K562 (cell line): ENCODE measurements at regions of chr10 and their contacts with region 1.

Region 1: GRCh38 chr10:116836902-116837523 is 12.3 kb upstream of the ENO4 start:
- DNase-seq: peak in 2 of 4 experiments; percentile 6 to 11
- ATAC-seq: peak; percentile 36; the same call in 1 of the 3 replicates
- H3K4me3 ChIP-seq: no peak overlapping the region
- H3K27ac ChIP-seq: no peak overlapping the region
- H3K4me1 ChIP-seq: no peaks in the 10 kb centered on the region
- H3K27me3 ChIP-seq: peaks cover 9 to 35% of the 10 kb centered on the region in 2 experiments; a peak in 4 of 5 replicates
- CTCF ChIP-seq: peak; percentile 22 to 61 (median 54); a peak in 4 of 6 replicates
- EP300 ChIP-seq: no peak
- POLR2A ChIP-seq: no peak
- RAD21 ChIP-seq: peak; percentile 54 to 65

Region 2: DNA sequence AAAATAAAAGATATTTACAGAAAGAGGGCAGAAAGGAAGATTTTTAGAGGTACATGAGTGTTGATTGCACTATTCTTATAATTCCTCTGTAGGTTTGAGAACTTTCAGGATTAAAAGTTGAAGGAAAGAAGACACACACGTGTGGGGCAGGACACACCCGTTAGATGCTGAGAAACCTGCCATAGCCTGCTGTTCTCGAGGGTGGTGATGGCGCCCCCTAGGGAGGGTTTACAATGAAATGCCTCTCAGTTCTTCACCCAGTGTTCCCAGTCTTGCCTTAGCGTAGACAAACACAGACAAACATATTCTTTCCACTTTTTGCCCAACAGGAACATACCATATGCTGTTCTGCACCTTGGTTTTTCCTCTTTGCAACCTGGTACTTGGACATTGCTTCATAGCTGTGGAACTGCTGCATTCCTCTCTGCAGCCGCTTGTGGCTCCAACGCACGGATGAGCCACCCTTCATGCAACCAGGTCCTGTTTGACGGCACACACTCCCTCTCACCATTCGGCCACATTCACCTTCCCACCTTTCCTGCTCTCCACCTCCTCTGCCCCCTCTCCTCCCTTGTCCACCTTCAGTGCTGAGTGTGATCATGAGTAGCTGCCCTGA is 71.4 kb before region 1 on chr10:
- CTCF ChIA-PET with region 1: no interaction called
- POLR2A ChIA-PET with region 1: no interaction called
- in situ Hi-C with region 1: no loop called
- intact Hi-C with region 1: no loop called
- DNase-seq: peak; percentile 55 to 61 (median 58)
- ATAC-seq: peak; percentile 91
- H3K4me3 ChIP-seq: no peak overlapping the region
- H3K27ac ChIP-seq: no peak overlapping the region
- H3K4me1 ChIP-seq: no peaks in the 10 kb centered on the region; a peak in 1 of 5 replicates
- H3K27me3 ChIP-seq: peaks cover 0 to 20% of the 10 kb centered on the region in 2 experiments; a peak in 3 of 5 replicates
- CTCF ChIP-seq: peak; percentile 61 to 68 (median 64)
- EP300 ChIP-seq: no peak
- POLR2A ChIP-seq: no peak
- RAD21 ChIP-seq: peak; percentile 13 to 52; a peak in 2 of 4 replicates

Region 3: GRCh38 chr10:116952729-116953128 is 115.7 kb after region 1 on chr10:
- CTCF ChIA-PET with region 1: no interaction called
- POLR2A ChIA-PET with region 1: no interaction called
- in situ Hi-C with region 1: no loop called
- intact Hi-C with region 1: no loop called
- DNase-seq: no peak
- ATAC-seq: no peak
- H3K4me3 ChIP-seq: no peak overlapping the region
- H3K27ac ChIP-seq: no peak overlapping the region
- H3K4me1 ChIP-seq: peaks cover 0 to under 1% of the 10 kb centered on the region in 2 experiments; a peak in 2 of 5 replicates
- H3K27me3 ChIP-seq: no peaks in the 10 kb centered on the region
- CTCF ChIP-seq: no peak
- EP300 ChIP-seq: no peak
- POLR2A ChIP-seq: no peak
- RAD21 ChIP-seq: no peak

Region 4: GRCh38 chr10:117074621-117075020 is 237.6 kb after region 1 on chr10:
- CTCF ChIA-PET with region 1: no interaction called
- POLR2A ChIA-PET with region 1: no interaction called
- in situ Hi-C with region 1: no loop called
- intact Hi-C with region 1: loop called (anchors 5 kb)
- DNase-seq: no peak
- ATAC-seq: peak; percentile 51; the same call in 1 of the 3 replicates
- H3K4me3 ChIP-seq: no peak overlapping the region
- H3K27ac ChIP-seq: no peak overlapping the region
- H3K4me1 ChIP-seq: no peaks in the 10 kb centered on the region; a peak in 1 of 5 replicates
- H3K27me3 ChIP-seq: peaks cover 3 to 4% of the 10 kb centered on the region in 2 experiments; a peak in 2 of 5 replicates
- CTCF ChIP-seq: peak in 2 of 3 experiments; percentile 23 to 40; a peak in 2 of 6 replicates
- EP300 ChIP-seq: no peak
- POLR2A ChIP-seq: no peak
- RAD21 ChIP-seq: no peak

Region 5: DNA sequence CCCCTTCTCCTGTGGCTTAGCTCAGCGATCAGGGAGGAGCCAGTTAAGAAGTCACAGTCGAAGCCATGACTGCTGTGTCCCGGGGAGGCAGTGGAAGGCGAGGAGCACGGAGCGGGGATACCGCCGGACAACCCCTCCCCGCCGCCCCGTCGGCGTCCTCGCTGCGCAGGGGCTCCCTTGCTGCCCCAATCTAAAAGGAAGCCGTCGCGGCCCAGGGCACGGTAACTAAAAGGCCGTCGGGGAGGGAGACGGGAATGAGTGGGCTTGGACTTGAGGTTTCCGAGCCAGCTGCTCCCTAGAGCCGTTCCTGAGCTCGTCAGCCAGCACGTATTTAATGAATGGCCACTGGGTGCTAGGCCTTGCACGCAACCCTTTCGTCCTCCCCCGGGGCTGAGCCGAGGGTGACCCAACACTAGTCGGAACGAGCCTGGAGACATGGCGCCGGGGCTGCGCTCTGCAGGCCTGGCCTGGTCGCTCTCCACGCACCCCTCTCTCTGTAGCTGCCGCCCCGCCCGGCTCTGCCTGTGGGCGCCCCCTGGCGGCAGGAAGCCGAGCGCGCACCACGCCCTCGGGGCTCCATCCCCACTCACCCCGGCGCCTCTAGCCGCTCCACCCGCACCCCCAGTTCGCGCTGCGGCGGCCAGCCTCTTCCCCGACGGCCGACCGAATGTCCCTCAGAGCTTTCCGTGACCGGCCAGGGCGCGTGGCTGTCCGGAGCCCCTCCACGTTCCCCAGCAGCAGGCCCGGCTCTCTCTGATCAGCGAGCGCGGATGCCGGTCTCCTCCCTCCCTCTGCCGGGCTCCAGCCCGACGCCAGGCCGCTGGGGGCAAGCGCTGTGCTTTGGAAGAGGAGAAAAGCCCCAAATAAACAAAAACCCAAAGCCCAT is 331.0 kb after region 1 on chr10:
- CTCF ChIA-PET with region 1: interaction called, 4 read pairs
- POLR2A ChIA-PET with region 1: no interaction called
- in situ Hi-C with region 1: no loop called
- intact Hi-C with region 1: loop called (anchors 2 kb)
- DNase-seq: peak; percentile 48 to 84 (median 83)
- ATAC-seq: peak; percentile 98
- H3K4me3 ChIP-seq: no peak overlapping the region
- H3K27ac ChIP-seq: no peak overlapping the region
- H3K4me1 ChIP-seq: peaks cover 0 to 29% of the 10 kb centered on the region in 2 experiments; a peak in 2 of 5 replicates
- H3K27me3 ChIP-seq: peaks cover 18 to 54% of the 10 kb centered on the region in 2 experiments; a peak in 4 of 5 replicates
- CTCF ChIP-seq: peak; percentile 64 to 75 (median 70)
- EP300 ChIP-seq: no peak
- POLR2A ChIP-seq: no peak
- RAD21 ChIP-seq: peak; percentile 34 to 61; a peak in 3 of 4 replicates